Activated CD8-positive, alpha-beta memory T cell treated with anti-CD3 and anti-CD28 coated beads, Interleukin-2, amount 10 ng/mL, durations not matched to agents 7 days and 5 days (primary cell): ENCODE measurements at regions of chr18 and their contacts with region 1.

Region 1: DNA sequence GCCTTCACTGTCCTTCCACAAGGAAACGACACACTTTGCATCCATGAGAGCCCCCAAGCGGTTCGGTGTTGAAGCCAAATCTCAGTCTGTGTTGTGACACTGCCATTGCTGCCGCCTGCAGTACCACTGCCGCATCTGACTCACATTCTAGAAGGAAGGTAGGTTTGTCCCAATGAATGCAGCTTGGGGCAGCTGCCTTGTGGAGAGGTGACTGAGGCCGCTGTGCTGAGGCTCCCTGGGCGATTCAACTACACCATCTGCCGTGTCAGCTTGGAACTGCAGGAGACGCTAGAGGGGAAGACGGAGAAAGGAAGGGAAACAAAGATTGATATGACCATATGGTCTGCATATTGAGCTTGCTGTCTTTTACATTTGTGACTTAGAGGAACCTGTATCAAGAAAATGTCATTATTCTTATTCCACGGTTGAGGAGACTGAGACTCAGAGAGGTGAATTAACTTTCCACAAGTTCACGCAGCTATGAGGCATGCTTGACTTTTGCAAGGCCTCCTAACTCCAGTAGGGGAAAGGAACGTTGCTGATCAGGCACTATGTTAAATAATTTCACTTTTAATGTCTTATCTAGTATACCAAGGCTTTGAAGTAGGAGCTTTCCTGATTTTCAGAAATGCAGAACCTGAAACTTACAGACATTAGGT is 43.5 kb upstream of the LMAN1 start:
- DNase-seq: peak; percentile 78
- ATAC-seq: peak; percentile 96
- H3K4me3 Mint-ChIP-seq: no peak overlapping the region
- H3K27ac Mint-ChIP-seq: no peak overlapping the region
- H3K4me1 Mint-ChIP-seq: peaks cover 3% of the 10 kb centered on the region
- H3K27me3 Mint-ChIP-seq: no peaks in the 10 kb centered on the region

Region 2: GRCh38 chr18:59249205-59249774 is 153.3 kb before region 1 on chr18:
- CTCF ChIA-PET with region 1: interaction called, 23 read pairs
- DNase-seq: peak; percentile 50
- ATAC-seq: no peak
- H3K4me3 Mint-ChIP-seq: no peak overlapping the region
- H3K27ac Mint-ChIP-seq: no peak overlapping the region
- H3K4me1 Mint-ChIP-seq: no peaks in the 10 kb centered on the region
- H3K27me3 Mint-ChIP-seq: peaks cover 75% of the 10 kb centered on the region

Region 3: DNA sequence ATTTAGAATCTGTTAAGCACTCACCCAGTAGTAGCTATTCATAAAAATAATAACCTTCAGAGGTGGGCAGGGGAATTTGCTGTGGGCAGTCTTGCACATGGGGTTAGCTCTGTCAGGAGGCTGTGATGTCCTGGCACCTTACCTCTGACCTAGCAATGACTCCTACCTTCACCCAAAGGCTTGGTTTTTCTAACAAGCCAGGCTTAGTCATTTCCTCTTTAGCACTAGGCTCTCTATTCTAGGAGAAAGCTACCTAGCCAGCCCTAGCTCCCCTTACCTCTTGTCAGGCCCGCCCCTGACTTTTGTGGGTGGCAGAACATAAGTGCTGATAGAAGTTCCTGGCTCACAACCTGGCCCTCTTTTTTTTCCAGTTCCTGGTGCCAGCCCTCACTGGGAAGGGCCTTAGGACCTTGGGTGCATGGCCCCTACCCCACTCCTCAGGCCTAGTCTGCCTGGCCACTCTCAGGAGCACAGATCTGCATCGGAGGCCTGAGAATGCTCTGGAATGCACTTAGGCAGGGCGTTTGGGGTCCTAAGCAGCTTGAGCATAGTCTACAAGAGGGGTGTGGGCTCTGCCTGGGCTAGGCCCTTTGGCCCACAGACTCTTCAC is 101.8 kb before region 1 on chr18:
- CTCF ChIA-PET with region 1: interaction called, 25 read pairs
- DNase-seq: no peak
- ATAC-seq: peak; percentile 74
- H3K4me3 Mint-ChIP-seq: no peak overlapping the region
- H3K27ac Mint-ChIP-seq: no peak overlapping the region
- H3K4me1 Mint-ChIP-seq: peaks cover 8% of the 10 kb centered on the region
- H3K27me3 Mint-ChIP-seq: peaks cover 50% of the 10 kb centered on the region

Region 4: DNA sequence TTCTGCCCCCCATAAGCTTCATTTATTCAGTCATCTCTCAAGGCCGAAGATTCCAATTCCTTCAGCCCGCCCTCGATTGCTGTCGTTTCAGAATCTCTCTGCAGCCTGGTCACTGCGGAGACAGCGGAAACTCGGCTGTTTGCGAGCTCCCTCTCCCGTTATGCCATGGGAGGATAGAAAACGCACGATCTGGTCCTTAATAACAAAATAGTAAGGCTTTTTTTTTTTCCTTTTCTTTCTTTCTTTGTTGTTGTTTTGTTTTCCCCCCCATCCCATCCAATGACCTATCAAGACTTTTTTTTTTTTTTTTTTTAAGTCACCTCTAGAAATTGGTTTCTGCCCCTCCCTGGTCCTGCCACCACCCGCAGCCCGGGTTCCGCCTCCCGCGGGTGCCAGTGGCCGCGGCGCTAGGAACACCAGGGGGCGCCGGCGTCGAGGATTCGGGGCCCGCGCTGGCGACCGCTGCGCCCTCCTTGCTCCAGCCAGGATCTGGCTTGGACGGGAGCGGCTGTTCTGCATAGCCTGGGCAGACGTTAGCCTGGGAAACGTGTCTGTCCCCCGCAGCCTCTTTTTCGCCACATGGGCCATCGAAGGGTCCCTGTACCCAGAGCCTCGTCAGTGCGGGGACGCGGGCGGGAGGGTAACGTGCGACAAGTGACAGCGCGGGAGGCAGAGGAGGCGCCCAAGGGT is 94.2 kb before region 1 on chr18:
- CTCF ChIA-PET with region 1: interaction called, 117 read pairs
- DNase-seq: peak; percentile 69
- ATAC-seq: peak; percentile 96
- H3K4me3 Mint-ChIP-seq: peak overlapping the region; percentile 43
- H3K27ac Mint-ChIP-seq: no peak overlapping the region
- H3K4me1 Mint-ChIP-seq: no peaks in the 10 kb centered on the region
- H3K27me3 Mint-ChIP-seq: peaks cover 61% of the 10 kb centered on the region

Region 5: GRCh38 chr18:59318460-59319050 is 84.0 kb before region 1 on chr18 and contains the start of gene CPLX4:
- CTCF ChIA-PET with region 1: interaction called, 11 read pairs
- DNase-seq: no peak
- ATAC-seq: no peak
- H3K4me3 Mint-ChIP-seq: no peak within 1 kb of the TSS
- H3K27ac Mint-ChIP-seq: no peak within 1 kb of the TSS
- H3K4me1 Mint-ChIP-seq: no peaks in the 10 kb centered on the region
- H3K27me3 Mint-ChIP-seq: peaks cover 35% of the 10 kb centered on the region
- total RNA-seq, gene CPLX4: not detected

Region 6: DNA sequence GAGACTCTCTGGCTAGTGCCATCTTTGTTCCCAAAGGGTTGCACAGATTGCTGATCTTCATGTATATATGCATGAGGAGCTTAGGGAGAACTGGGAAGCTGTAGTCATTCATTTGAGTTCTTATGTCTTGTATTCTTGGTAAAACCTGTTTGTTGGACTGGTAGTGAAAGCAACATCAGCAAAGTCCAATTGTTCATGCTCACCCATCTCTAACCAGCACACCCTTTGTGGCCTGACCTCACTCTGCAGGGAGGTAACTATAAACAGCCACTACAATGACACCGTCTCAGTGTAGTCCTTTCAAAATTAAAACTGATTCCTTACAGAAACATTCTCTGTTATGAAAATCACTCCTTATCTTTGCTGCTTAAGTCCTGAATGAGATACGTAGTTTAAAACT is 29.6 kb before region 1 on chr18:
- CTCF ChIA-PET with region 1: no interaction called
- DNase-seq: no peak
- ATAC-seq: no peak
- H3K4me3 Mint-ChIP-seq: no peak overlapping the region
- H3K27ac Mint-ChIP-seq: no peak overlapping the region
- H3K4me1 Mint-ChIP-seq: peaks cover 2% of the 10 kb centered on the region
- H3K27me3 Mint-ChIP-seq: peaks cover 20% of the 10 kb centered on the region